IMR-90 (cell line): ENCODE measurements at regions of chr16 and their contacts with region 1.

Region 1: DNA sequence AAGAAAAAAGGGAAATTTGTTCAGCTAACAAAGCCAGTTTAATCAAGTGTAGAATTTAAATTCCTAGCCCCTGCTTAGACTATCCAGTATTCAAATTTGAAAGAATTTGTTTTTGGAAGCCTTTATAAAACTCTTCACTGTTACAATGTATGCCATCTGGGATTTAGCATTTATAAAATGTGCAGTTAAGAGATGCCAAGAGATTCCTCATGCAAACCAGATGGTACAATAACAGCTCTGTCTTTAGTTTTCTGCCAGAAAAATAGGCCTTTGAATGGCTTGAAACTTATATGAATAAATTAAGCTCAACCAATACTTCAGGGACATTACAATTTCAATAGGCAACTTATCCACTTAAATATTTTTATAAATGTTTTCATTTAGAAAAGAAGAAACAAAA is 6.8 kb upstream of the ANKS4B start:
- DNase-seq: no peak
- ATAC-seq: no peak
- H3K4me3 ChIP-seq: no peak overlapping the region
- H3K27ac ChIP-seq: no peak overlapping the region
- H3K4me1 ChIP-seq: no peaks in the 10 kb centered on the region
- H3K27me3 ChIP-seq: peaks cover 19% of the 10 kb centered on the region
- CTCF ChIP-seq: no peak
- POLR2A ChIP-seq: no peak
- RAD21 ChIP-seq: no peak

Region 2: DNA sequence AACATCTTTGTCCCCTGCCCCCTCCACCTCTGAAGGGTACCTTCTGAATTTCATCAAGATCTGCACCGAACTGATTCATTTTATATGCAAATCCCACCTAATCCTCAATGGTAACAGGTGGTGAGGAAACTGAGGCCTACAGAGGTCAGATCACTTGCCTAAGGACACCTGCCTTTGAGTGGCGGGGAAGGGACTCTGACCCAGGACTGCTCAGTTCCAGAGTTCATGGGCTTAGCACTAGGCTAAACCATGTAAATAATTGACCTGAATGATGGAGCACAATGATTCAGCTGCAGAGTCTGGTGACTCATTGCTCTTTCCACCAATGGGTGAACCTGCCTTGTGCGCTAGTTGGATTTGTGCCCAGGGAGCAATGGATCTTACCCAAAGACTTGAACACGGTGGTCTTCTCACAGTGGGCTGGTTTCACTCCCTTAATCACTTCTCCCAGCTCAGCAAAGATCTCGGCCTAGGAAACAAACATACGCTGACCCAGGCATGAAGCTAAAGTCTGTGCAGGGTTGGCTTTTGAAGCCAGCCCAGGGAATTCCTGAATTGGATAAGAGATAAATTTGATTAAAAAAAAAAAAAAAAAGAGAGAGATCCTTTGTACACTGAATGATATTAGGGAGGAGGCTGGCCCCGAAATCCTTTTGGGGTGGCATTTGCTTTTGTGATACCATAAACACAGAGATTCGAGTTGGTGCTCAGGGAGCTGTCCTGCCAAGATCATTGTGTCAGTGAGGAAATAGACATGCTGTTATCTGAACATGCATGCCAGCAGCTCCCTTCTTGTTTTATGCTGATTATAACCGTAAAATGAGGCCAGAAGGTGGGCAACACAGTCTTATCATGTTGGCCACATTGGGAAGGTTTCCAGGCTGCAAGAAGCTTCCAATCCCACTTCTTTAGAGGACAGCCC is 34.4 kb after region 1 on chr16:
- CTCF ChIA-PET with region 1: interaction called, 12 read pairs
- POLR2A ChIA-PET with region 1: no interaction called
- dilution Hi-C with region 1: no loop called
- in situ Hi-C with region 1: no loop called
- intact Hi-C with region 1: no loop called
- DNase-seq: peak; percentile 94
- ATAC-seq: peak; percentile 97
- H3K4me3 ChIP-seq: no peak overlapping the region
- H3K27ac ChIP-seq: no peak overlapping the region
- H3K4me1 ChIP-seq: no peaks in the 10 kb centered on the region; the same call in 1 of the 2 replicates
- H3K27me3 ChIP-seq: peaks cover 8% of the 10 kb centered on the region
- CTCF ChIP-seq: no peak
- POLR2A ChIP-seq: no peak
- RAD21 ChIP-seq: no peak